WTC11 (cell line): ENCODE measurements at regions of chr14 and their contacts with region 1.

Region 1: GRCh38 chr14:93160353-93160801 is 24.3 kb downstream of the MOAP1 start:
- DNase-seq: peak; percentile 29
- ATAC-seq: peak; percentile 79
- H3K4me3 Mint-ChIP-seq: no peak overlapping the region
- H3K27ac Mint-ChIP-seq: no peak overlapping the region
- H3K4me1 Mint-ChIP-seq: peaks cover 4% of the 10 kb centered on the region
- H3K27me3 Mint-ChIP-seq: no peaks in the 10 kb centered on the region
- CTCF ChIP-seq: no peak

Region 2: DNA sequence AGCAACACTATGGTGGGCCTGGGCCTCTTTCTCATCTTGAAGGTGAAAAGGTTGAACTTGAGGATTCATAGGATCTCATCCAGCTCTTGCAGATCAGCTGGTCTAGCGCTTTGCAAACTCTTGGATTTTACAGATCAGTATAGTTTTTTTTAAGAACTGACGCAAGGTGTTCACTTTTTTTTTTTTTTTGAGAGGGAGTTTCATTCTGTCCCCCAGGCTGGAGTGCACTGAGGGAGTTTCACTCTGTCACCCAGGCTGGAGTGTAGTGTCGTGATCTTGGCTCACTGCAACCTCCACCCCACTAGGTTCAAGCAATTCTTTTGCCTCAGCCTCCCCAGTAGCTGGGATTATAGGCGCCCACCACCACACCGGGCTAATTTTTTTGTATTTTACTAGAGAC is 391.6 kb before region 1 on chr14:
- CTCF ChIA-PET with region 1: no interaction called
- POLR2A ChIA-PET with region 1: no interaction called
- DNase-seq: no peak
- ATAC-seq: no peak
- H3K4me3 Mint-ChIP-seq: no peak overlapping the region
- H3K27ac Mint-ChIP-seq: no peak overlapping the region
- H3K4me1 Mint-ChIP-seq: no peaks in the 10 kb centered on the region; the same call in 1 of the 2 replicates
- H3K27me3 Mint-ChIP-seq: no peaks in the 10 kb centered on the region; the same call in 1 of the 2 replicates
- CTCF ChIP-seq: no peak

Region 3: DNA sequence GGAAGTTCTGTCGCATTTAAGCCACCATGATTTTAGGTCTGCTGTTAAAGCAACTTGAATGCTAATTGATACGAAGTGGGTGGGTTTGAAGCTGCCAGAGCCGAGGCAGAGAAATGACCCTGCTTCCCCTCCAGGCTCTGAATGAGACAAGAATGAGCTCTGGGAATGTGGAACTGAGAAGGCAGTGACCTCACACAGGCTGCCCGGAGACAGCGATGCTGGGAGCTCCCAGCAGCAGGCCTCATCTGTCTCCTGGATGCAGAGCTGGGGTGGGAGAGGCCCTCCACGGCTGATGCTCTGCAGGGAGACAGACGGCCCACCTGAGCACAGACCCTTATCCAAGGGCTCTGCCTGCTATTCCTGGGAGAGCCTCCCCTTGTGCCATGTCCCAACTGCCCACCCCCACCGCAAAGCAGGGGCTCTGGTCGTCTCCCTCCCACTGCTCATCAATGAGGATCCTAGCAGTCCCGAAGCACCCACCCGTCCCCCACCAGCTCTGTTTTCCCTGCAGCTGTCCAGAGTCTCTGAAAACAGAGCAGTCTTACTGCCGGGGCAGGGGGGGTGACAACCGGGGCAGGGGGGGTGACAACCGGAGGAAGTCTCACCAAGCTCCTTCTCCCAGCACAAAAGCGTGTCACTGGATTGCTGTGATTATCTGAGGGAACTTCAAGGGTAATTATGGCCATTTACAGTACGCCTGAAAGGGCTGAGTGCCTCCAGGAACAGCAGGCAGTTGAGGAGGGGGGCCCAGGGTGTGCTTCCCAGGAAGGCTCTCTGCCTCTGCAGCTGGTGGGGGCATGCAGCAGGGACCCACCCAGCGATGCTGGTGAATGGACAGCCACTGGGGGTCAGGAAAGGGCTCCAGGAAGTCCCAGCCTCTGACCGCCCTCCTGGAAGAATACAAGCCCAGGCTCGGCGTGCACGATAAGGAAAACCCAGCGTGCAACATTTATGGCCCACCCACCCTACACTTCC is 169.6 kb before region 1 on chr14:
- CTCF ChIA-PET with region 1: no interaction called
- POLR2A ChIA-PET with region 1: no interaction called
- DNase-seq: no peak
- ATAC-seq: no peak
- H3K4me3 Mint-ChIP-seq: no peak overlapping the region
- H3K27ac Mint-ChIP-seq: peak overlapping the region; percentile 3; the same call in 1 of the 2 replicates
- H3K4me1 Mint-ChIP-seq: peaks cover 12% of the 10 kb centered on the region
- H3K27me3 Mint-ChIP-seq: no peaks in the 10 kb centered on the region
- CTCF ChIP-seq: no peak

Region 4: DNA sequence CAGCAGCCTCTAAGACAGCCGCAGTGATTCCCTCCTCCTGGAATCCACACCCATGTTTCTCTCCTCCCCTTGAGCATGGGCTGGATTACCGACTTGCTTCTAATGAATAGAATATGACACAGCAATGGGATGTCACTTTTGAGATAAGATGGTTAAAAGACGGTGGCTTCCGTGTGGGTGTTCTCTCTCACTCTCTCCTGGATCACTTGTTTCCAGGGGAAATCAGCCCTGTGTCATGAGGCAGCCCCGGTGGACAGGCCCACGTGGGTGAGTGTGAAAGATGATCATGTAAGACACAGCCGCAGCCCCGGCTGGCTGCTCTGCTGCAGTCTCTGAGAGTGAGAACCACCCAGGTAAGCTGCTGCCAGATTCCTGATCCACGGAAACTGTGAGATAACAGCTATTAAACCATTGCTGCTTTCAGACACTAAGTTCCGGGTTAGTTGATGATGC is 13.6 kb after region 1 on chr14:
- CTCF ChIA-PET with region 1: interaction called, 12 read pairs
- POLR2A ChIA-PET with region 1: no interaction called
- DNase-seq: no peak
- ATAC-seq: no peak
- H3K4me3 Mint-ChIP-seq: no peak overlapping the region
- H3K27ac Mint-ChIP-seq: no peak overlapping the region
- H3K4me1 Mint-ChIP-seq: no peaks in the 10 kb centered on the region
- H3K27me3 Mint-ChIP-seq: no peaks in the 10 kb centered on the region
- CTCF ChIP-seq: no peak

Region 5: GRCh38 chr14:93184388-93185353 is 24.3 kb after region 1 on chr14 and contains the starts of genes LYSET and MOAP1:
- CTCF ChIA-PET with region 1: interaction called, 12 read pairs
- POLR2A ChIA-PET with region 1: interaction called, 8 read pairs
- DNase-seq: peak; percentile 89
- ATAC-seq: peak; percentile 88
- H3K4me3 Mint-ChIP-seq: peak within 1 kb of the TSS; percentile 96
- H3K27ac Mint-ChIP-seq: peak within 1 kb of the TSS; percentile 98
- H3K4me1 Mint-ChIP-seq: peaks cover 18% of the 10 kb centered on the region
- H3K27me3 Mint-ChIP-seq: no peaks in the 10 kb centered on the region
- CTCF ChIP-seq: no peak
- total RNA-seq, gene LYSET: 24.7 to 25.6 TPM (median 25.5 TPM) in 3 replicates
- total RNA-seq, gene MOAP1: 16.7 to 18.1 TPM (median 17.2 TPM) in 3 replicates